GM18951 (cell line): ENCODE measurements at regions of chr4 and their contacts with region 1.

Region 1: DNA sequence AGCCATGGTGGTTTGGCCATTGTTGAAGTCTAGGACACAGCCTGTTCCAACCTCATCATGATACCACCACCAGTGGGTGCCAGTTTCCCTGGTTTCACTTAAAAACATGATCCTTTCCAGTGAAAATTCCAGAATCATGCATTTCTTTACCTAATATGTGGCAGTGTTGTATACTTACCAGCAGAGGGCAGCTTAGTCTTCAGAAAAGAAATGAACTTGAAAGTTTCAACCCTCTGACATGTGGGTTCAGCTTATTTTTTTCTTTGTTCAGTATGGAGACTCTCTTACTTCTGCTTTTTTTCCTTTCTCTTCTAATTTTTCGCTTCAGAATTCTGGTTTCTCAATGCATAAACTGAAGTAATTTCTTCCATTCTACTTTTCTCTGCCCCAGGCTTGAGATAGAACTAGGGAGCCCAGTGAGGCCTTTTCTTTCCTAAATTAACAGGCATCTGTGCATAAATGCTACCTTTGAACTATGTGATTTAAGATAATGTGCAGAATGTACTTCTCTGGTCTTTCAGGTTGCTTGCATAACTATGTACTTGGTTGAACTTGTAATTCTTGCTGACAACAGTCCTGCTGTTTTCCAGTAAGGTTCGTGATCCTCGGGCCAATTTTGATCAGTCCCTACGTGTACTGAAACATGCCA is 10.7 kb downstream of the LIAS start:
- POLR2A ChIP-seq: no peak

Region 2: DNA sequence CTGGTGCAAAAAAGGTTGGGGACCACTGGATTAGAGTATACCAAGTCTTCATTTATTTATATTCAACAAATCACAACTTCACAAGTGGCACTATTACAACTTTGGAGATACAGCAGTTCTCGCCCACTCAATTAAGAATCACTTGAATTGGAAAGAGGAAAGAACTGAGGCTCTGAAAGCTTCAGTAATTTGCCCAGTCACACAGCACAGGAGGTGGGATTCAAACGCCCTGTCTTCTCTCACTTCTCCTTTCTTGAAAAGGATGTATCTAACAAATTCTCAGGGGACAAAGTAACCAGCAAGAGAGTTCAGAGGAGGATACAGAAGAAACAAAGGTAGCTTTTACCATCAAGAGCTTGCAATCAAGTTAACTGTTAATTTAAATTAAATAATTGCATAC is 156.7 kb after region 1 on chr4:
- in situ Hi-C with region 1: no loop called
- POLR2A ChIP-seq: peak; percentile 24

Region 3: GRCh38 chr4:39977489-39978377 is 508.2 kb after region 1 on chr4 and contains the start of gene PDS5A:
- in situ Hi-C with region 1: loop called (anchors 10 kb)
- POLR2A ChIP-seq: peak; percentile 89